IMR-90 (cell line): ENCODE measurements at regions of chr14 and their contacts with region 1.

Region 1: GRCh38 chr14:93163570-93163969 is 21.1 kb downstream of the MOAP1 start:
- DNase-seq: no peak
- ATAC-seq: no peak
- H3K4me3 ChIP-seq: no peak overlapping the region
- H3K27ac ChIP-seq: no peak overlapping the region
- H3K4me1 ChIP-seq: no peaks in the 10 kb centered on the region
- H3K27me3 ChIP-seq: peaks cover 2% of the 10 kb centered on the region; the same call in 1 of the 2 replicates
- CTCF ChIP-seq: no peak
- POLR2A ChIP-seq: no peak
- RAD21 ChIP-seq: no peak

Region 2: GRCh38 chr14:91363776-91364523 is 1799.6 kb before region 1 on chr14:
- CTCF ChIA-PET with region 1: no interaction called
- POLR2A ChIA-PET with region 1: no interaction called
- dilution Hi-C with region 1: no loop called
- in situ Hi-C with region 1: no loop called
- intact Hi-C with region 1: no loop called
- DNase-seq: no peak
- ATAC-seq: no peak
- H3K4me3 ChIP-seq: no peak overlapping the region
- H3K27ac ChIP-seq: no peak overlapping the region
- H3K4me1 ChIP-seq: no peaks in the 10 kb centered on the region; the same call in 1 of the 2 replicates
- H3K27me3 ChIP-seq: no peaks in the 10 kb centered on the region; the same call in 1 of the 2 replicates
- CTCF ChIP-seq: no peak
- POLR2A ChIP-seq: no peak
- RAD21 ChIP-seq: no peak

Region 3: DNA sequence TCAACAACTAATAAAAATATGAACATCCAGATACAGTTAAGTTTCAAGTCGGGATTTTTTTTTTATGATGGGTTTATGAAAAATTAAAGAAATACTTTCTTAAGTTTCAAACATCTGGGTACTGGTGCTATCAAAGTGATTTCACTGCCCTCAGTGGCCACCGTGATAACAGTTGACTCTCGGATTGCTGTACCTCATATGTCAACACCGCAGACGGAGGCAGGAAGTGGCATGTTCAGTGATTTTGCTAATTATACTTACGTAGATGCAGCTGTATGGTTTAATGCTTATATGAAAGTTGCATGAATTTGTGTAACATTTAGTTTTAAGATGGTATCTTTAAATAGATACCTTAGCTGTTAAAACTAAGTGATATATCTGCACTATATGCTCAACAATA is 1195.3 kb before region 1 on chr14:
- CTCF ChIA-PET with region 1: no interaction called
- POLR2A ChIA-PET with region 1: no interaction called
- dilution Hi-C with region 1: no loop called
- in situ Hi-C with region 1: no loop called
- intact Hi-C with region 1: no loop called
- DNase-seq: no peak
- ATAC-seq: no peak
- H3K4me3 ChIP-seq: no peak overlapping the region
- H3K27ac ChIP-seq: no peak overlapping the region
- H3K4me1 ChIP-seq: peaks cover 2% of the 10 kb centered on the region; the same call in 1 of the 2 replicates
- H3K27me3 ChIP-seq: no peaks in the 10 kb centered on the region
- CTCF ChIP-seq: no peak
- POLR2A ChIP-seq: no peak
- RAD21 ChIP-seq: no peak

Region 4: GRCh38 chr14:93219103-93219726 is 55.6 kb after region 1 on chr14:
- CTCF ChIA-PET with region 1: interaction called, 3 read pairs
- POLR2A ChIA-PET with region 1: interaction called, 11 read pairs
- dilution Hi-C with region 1: no loop called
- in situ Hi-C with region 1: no loop called
- intact Hi-C with region 1: no loop called
- DNase-seq: peak; percentile 65
- ATAC-seq: peak; percentile 70
- H3K4me3 ChIP-seq: no peak overlapping the region
- H3K27ac ChIP-seq: no peak overlapping the region
- H3K4me1 ChIP-seq: no peaks in the 10 kb centered on the region
- H3K27me3 ChIP-seq: no peaks in the 10 kb centered on the region
- CTCF ChIP-seq: peak; percentile 53
- POLR2A ChIP-seq: no peak
- RAD21 ChIP-seq: peak; percentile 55